ENCODE measurements at regions of chr1 and their contacts with region 1.

Region 1: DNA sequence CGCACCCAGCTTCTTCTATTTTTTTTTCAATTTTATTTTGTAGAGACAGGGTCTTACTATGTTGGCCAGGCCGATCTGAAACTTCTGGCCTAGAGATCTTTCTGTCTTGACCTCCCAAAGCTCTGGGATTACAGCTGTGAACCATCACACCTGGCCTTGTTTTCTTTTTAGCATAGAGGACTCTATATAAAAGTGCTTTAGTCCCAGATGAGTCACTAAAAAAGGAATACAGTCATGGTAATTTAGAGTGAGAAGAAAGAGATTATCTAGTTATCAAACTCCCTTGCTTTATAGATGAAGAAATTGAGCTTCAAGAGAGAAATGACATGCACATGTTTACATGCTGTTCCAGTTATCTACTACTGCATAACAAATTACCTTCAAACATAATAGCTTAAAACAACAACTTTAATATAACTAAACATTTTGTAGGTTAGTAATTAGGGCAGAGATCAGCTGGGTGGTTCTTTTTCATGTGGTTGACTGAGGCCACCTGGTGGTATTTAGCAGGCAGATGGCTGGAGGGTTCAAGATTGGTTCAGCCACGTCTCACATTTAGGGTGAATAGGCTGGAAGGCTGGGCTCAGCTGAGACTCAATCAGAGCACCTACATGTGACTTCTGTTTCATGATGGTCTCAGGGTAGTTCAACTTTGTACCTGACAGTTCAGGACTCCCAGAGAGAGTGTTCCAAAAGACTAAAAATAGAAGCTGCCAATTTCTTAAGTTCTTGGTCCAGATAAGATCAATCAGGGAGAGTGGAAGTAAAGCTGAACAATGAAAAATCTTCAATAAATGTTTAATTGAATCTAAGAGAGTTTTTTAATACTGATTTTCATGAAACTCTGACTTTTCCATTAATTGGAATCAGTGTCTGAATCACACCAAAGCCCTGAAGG is 16.9 kb upstream of the MTF2 start:
- DNase-seq: peak in 6 of 9 experiments; percentile 25 to 72 (median 37)
- ATAC-seq: peak; percentile 72
- H3K4me3 ChIP-seq: no peak overlapping the region
- H3K4me3 Mint-ChIP-seq: no peak overlapping the region
- H3K27ac ChIP-seq: no peak overlapping the region
- H3K27ac Mint-ChIP-seq: no peak overlapping the region
- H3K4me1 ChIP-seq: no peaks in the 10 kb centered on the region
- H3K4me1 Mint-ChIP-seq: peaks cover 4% of the 10 kb centered on the region
- H3K27me3 ChIP-seq: no peaks in the 10 kb centered on the region
- H3K27me3 Mint-ChIP-seq: peaks cover 12% of the 10 kb centered on the region
- CTCF ChIP-seq: peak; percentile 48

Region 2: DNA sequence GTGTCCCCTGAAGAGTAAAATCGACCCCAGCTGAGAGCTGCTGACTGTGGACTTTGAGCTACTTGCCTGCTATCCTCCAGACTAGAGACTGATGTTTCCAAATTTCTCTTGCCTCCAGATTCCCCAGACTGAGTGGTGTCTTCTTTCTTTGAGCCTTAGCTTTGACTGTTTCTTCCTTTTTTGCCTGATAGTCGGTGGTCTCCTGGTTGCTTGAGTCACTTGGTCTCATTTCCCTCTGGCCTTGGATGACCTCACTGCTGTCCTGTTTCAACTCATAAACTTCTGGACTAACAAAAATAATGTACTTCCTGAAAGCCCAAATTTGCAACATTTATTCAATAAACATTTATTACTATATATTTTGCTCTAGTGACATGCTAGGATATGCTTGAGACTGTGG is 48.0 kb before region 1 on chr1:
- CTCF ChIA-PET with region 1: interaction called, 14 read pairs
- POLR2A ChIA-PET with region 1: no interaction called
- intact Hi-C with region 1: no loop called
- DNase-seq: no peak
- ATAC-seq: no peak
- H3K4me3 ChIP-seq: no peak overlapping the region
- H3K4me3 Mint-ChIP-seq: no peak overlapping the region
- H3K27ac ChIP-seq: no peak overlapping the region
- H3K27ac Mint-ChIP-seq: no peak overlapping the region
- H3K4me1 ChIP-seq: no peaks in the 10 kb centered on the region
- H3K4me1 Mint-ChIP-seq: no peaks in the 10 kb centered on the region
- H3K27me3 ChIP-seq: no peaks in the 10 kb centered on the region
- H3K27me3 Mint-ChIP-seq: peaks cover 9% of the 10 kb centered on the region
- CTCF ChIP-seq: no peak

Region 3: GRCh38 chr1:93021539-93022134 is 40.5 kb before region 1 on chr1:
- CTCF ChIA-PET with region 1: interaction called, 72 read pairs
- POLR2A ChIA-PET with region 1: interaction called, 4 read pairs
- intact Hi-C with region 1: loop called (anchors 1 kb)
- DNase-seq: peak in 3 of 9 experiments; percentile 7 to 72 (median 57)
- ATAC-seq: peak; percentile 79
- H3K4me3 ChIP-seq: no peak overlapping the region
- H3K4me3 Mint-ChIP-seq: no peak overlapping the region
- H3K27ac ChIP-seq: no peak overlapping the region
- H3K27ac Mint-ChIP-seq: no peak overlapping the region
- H3K4me1 ChIP-seq: no peaks in the 10 kb centered on the region
- H3K4me1 Mint-ChIP-seq: peaks cover 3% of the 10 kb centered on the region
- H3K27me3 ChIP-seq: no peaks in the 10 kb centered on the region
- H3K27me3 Mint-ChIP-seq: peaks cover 11% of the 10 kb centered on the region
- CTCF ChIP-seq: peak; percentile 96